ENCODE measurements at regions of chr6 and their contacts with region 1.

Region 1: DNA sequence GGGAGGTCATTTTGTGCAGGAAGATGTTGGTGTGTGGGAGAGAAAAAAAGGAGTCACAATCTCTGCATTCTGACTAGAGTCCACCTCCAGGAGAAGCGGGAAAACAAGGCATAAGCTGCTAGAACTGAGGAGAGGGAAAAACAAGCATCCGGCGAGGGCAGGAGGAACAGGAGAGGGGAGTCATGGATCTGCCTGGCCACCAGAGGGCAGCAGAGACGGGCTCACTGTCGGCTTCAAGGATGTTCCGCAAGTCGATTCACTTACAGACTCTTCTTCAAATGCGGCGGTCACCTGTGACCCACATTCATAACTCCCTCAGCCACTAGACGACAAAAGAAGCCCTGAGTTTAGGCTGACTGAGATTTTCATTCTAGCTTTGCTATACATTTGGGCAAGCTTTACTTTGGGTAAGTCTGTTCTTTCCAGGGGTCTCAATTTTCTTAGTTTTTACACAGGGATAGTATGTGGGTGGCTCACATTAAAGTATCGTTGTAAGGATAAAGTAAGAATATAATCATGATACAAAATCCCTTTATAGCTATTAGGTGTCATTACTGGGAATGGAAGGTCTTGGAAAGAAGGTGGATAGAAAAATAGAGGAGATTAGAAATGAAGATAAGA is 6.6 kb upstream of the BTNL2 start:
- DNase-seq: peak; percentile 93
- ATAC-seq: peak; percentile 93
- H3K4me3 Mint-ChIP-seq: no peak overlapping the region
- H3K27ac Mint-ChIP-seq: no peak overlapping the region
- H3K4me1 Mint-ChIP-seq: peaks cover 5% of the 10 kb centered on the region
- H3K27me3 Mint-ChIP-seq: peaks cover 39% of the 10 kb centered on the region

Region 2: GRCh38 chr6:31888276-31889258 is 525.0 kb before region 1 on chr6:
- CTCF ChIA-PET with region 1: no interaction called
- POLR2A ChIA-PET with region 1: no interaction called
- intact Hi-C with region 1: no loop called
- DNase-seq: peak; percentile 79
- ATAC-seq: no peak
- H3K4me3 Mint-ChIP-seq: no peak overlapping the region
- H3K27ac Mint-ChIP-seq: no peak overlapping the region
- H3K4me1 Mint-ChIP-seq: no peaks in the 10 kb centered on the region
- H3K27me3 Mint-ChIP-seq: no peaks in the 10 kb centered on the region

Region 3: DNA sequence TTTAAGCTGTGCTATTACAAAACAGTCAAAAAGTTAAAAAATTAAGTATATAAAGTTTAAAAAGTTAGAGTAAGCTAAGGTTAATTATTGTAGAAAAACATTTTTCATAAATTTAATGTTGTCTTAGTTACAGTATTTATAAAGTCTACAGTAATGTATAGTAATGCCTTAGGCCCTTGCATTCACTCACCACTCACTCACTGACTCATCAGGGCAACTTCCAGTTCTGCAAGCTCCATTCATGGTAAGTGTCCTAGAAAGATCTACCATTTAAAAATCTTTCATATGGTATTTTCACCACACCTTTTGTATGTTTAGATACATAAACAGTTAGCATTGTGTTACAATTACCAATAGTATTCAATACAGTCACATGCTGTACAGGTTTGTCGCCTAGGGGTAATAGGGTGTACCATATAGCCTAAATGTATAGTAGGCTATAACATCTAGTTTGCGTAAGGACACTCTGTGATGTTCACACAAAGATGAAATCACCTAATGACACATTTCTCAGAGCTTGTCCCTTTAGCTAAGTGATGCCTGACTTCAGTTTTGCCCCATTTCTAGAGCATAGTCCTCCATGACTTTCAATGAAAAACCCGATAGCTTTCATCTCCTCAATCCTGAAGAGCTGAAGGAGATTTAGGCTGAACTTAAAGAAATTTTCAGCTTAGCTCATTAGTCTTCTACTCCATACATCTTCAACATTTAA is 11.2 kb after region 1 on chr6:
- CTCF ChIA-PET with region 1: interaction called, 22 read pairs
- POLR2A ChIA-PET with region 1: no interaction called
- intact Hi-C with region 1: no loop called
- DNase-seq: no peak
- ATAC-seq: no peak
- H3K4me3 Mint-ChIP-seq: no peak overlapping the region
- H3K27ac Mint-ChIP-seq: no peak overlapping the region
- H3K4me1 Mint-ChIP-seq: no peaks in the 10 kb centered on the region
- H3K27me3 Mint-ChIP-seq: peaks cover 20% of the 10 kb centered on the region

Region 4: DNA sequence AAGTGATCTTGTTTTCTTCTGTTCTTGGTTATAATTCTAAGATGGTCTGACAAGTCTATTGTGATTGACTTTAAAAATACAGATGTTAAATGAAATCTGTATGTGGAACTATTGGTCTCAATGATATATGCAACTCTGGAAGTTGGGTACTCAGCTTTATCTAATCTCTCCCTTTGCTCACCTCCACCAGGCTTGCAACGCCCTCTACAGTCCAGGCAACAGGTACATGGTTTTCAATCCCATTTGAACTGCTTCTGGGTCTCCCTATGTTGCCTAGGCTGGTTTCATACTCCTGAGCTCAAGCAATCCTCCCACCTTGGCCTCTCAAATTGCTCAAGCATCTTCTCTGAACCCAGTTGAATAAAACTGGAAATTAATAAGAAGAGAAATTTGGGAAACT is 278.5 kb after region 1 on chr6:
- CTCF ChIA-PET with region 1: interaction called, 36 read pairs
- POLR2A ChIA-PET with region 1: no interaction called
- intact Hi-C with region 1: loop called (anchors 1 to 2 kb)
- DNase-seq: peak; percentile 80
- ATAC-seq: peak; percentile 82
- H3K4me3 Mint-ChIP-seq: no peak overlapping the region
- H3K27ac Mint-ChIP-seq: no peak overlapping the region
- H3K4me1 Mint-ChIP-seq: peaks cover 8% of the 10 kb centered on the region
- H3K27me3 Mint-ChIP-seq: peaks cover 16% of the 10 kb centered on the region

Region 5: GRCh38 chr6:32785781-32786533 is 372.4 kb after region 1 on chr6:
- CTCF ChIA-PET with region 1: interaction called, 74 read pairs
- POLR2A ChIA-PET with region 1: no interaction called
- intact Hi-C with region 1: loop called in 1 of 2 experiments (anchors 1 kb)
- DNase-seq: peak; percentile 45
- ATAC-seq: peak; percentile 78
- H3K4me3 Mint-ChIP-seq: no peak overlapping the region
- H3K27ac Mint-ChIP-seq: no peak overlapping the region
- H3K4me1 Mint-ChIP-seq: no peaks in the 10 kb centered on the region
- H3K27me3 Mint-ChIP-seq: peaks cover 25% of the 10 kb centered on the region

Measured in activated CD4-positive, alpha-beta T cell treated with anti-CD3 and anti-CD28 coated beads for 36 hours (primary cell).